CD4-positive, alpha-beta memory T cell (primary cell): ENCODE measurements at regions of chr6 and their contacts with region 1.

Region 1: GRCh38 chr6:73675466-73676098 is 20.4 kb upstream of the CD109 start:
- DNase-seq: peak; percentile 52 to 66 (median 53)
- H3K4me3 ChIP-seq: no peak overlapping the region
- H3K4me3 Mint-ChIP-seq: no peak overlapping the region
- H3K27ac ChIP-seq: no peak overlapping the region
- H3K27ac Mint-ChIP-seq: peak overlapping the region in 1 of 7 donors; percentile 45
- H3K4me1 ChIP-seq: no peaks in the 10 kb centered on the region
- H3K4me1 Mint-ChIP-seq: peaks cover 0 to 3% (median 2%) of the 10 kb centered on the region in 4 donors
- H3K27me3 ChIP-seq: no peaks in the 10 kb centered on the region
- H3K27me3 Mint-ChIP-seq: peaks cover 13 to 16% of the 10 kb centered on the region in 2 donors

Region 2: GRCh38 chr6:73691512-73691911 is 15.9 kb after region 1 on chr6:
- CTCF ChIA-PET with region 1: interaction called, 15 read pairs
- POLR2A ChIA-PET with region 1: no interaction called
- intact Hi-C with region 1: no loop called
- DNase-seq: no peak
- H3K4me3 ChIP-seq: no peak overlapping the region
- H3K4me3 Mint-ChIP-seq: no peak overlapping the region
- H3K27ac ChIP-seq: no peak overlapping the region
- H3K27ac Mint-ChIP-seq: no peak overlapping the region
- H3K4me1 ChIP-seq: peaks cover 13% of the 10 kb centered on the region
- H3K4me1 Mint-ChIP-seq: peaks cover 5 to 13% (median 10%) of the 10 kb centered on the region in 4 donors
- H3K27me3 ChIP-seq: no peaks in the 10 kb centered on the region
- H3K27me3 Mint-ChIP-seq: peaks cover 16 to 35% of the 10 kb centered on the region in 2 donors

Region 3: DNA sequence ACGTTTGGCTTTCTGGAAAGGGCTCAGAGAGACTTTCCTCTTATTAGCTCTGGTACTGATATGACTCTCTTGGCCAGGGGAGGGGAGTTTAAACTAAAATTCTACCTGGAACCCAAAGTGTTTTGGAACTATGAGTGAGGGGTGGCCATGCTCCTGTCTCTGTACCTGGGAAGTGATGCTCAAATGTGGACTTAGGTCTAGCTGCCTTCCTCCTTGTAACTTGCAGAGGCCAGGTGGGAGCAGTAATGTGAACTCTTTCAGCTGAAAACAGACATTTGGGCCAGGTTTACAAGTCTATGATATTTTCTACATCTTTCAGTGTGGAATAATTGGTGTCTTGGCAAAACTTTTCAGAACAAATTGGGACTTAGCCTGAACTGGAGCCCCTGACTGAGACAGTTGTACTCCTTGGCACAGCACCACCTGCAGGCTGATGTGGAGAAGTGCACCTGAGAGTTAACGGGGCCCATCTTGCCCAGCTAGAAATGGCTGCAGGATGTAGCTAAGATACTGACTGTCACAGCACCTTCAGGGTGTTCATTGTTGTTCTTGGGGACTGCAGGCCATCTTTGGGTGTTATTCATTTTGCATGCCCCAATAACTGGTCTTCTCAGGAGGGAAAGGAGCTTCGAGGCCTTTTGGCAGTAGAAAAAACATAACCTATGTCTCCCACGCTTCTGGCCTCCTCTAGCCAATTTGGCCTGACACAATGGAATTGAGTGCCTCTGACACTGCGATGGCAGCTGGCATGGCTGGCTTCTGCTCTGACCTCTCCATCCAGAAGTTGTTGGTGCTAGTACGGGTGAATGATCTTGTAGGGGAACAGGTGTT is 57.5 kb after region 1 on chr6:
- CTCF ChIA-PET with region 1: interaction called, 21 read pairs
- POLR2A ChIA-PET with region 1: no interaction called
- intact Hi-C with region 1: loop called (anchors 1 kb)
- DNase-seq: peak; percentile 48 to 63 (median 57)
- H3K4me3 ChIP-seq: no peak overlapping the region
- H3K4me3 Mint-ChIP-seq: no peak overlapping the region
- H3K27ac ChIP-seq: no peak overlapping the region
- H3K27ac Mint-ChIP-seq: peak overlapping the region in 1 of 7 donors; percentile 4
- H3K4me1 ChIP-seq: no peaks in the 10 kb centered on the region
- H3K4me1 Mint-ChIP-seq: no peaks in the 10 kb centered on the region
- H3K27me3 ChIP-seq: no peaks in the 10 kb centered on the region
- H3K27me3 Mint-ChIP-seq: peaks cover 3% of the 10 kb centered on the region in 2 donors